Mammary epithelial cell (primary cell): ENCODE measurements at regions of chr22 and their contacts with region 1.

Region 1: DNA sequence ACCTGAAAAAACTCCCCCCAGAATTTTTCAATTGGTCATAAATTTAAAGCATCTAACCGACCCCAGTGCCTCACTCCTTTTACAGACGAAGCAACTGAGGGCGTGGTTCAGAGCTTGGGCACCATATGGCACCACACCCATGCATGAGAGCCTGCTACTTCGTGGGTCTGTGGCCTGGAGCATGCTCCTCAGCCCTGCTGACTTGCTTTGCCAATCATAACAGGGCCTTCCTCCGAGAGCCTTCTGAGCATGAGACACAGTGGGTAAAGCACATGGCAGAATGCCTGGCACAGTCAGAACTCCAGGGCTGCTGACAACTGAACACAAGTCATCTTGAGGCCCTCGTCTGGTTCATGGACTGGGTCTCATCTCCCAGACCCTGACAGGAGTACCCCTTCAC is 33.3 kb downstream of the HIRA start:
- DNase-seq: no peak
- H3K4me3 ChIP-seq: no peak overlapping the region
- H3K27ac ChIP-seq: no peak overlapping the region
- H3K4me1 ChIP-seq: no peaks in the 10 kb centered on the region
- H3K27me3 ChIP-seq: no peaks in the 10 kb centered on the region
- CTCF ChIP-seq: no peak

Region 2: GRCh38 chr22:17570851-17571641 is 1827.2 kb before region 1 on chr22:
- CTCF ChIA-PET with region 1: no interaction called
- dilution Hi-C with region 1: no loop called
- in situ Hi-C with region 1: no loop called
- intact Hi-C with region 1: no loop called
- DNase-seq: peak; percentile 53
- H3K4me3 ChIP-seq: peak overlapping the region in 1 of 3 experiments; percentile 13
- H3K27ac ChIP-seq: peak overlapping the region; percentile 42
- H3K4me1 ChIP-seq: peaks cover 23% of the 10 kb centered on the region
- H3K27me3 ChIP-seq: no peaks in the 10 kb centered on the region
- CTCF ChIP-seq: no peak

Region 3: DNA sequence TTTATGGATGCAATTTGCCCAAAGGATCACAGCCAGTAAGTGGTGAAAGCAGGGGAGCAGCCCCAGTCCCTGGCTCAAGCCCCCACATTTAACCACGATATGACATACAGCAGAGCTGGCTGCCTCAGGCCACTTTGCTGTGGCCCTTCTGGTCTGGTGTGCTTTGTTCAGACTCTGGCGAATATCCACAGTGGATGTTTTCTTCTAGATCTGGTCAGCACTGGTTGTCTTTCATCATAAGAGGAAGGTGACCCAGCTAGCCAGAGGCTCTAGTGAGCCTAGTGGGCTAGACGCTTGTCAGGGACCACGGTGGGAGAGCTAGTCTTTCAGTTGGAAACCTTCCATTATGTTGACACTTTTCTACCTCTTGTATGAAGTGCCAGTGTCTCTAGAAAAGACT is 318.5 kb before region 1 on chr22:
- CTCF ChIA-PET with region 1: no interaction called
- dilution Hi-C with region 1: loop called (anchors 5 kb)
- in situ Hi-C with region 1: no loop called
- intact Hi-C with region 1: no loop called
- DNase-seq: no peak
- H3K4me3 ChIP-seq: no peak overlapping the region
- H3K27ac ChIP-seq: no peak overlapping the region
- H3K4me1 ChIP-seq: no peaks in the 10 kb centered on the region
- H3K27me3 ChIP-seq: no peaks in the 10 kb centered on the region
- CTCF ChIP-seq: no peak

Region 4: DNA sequence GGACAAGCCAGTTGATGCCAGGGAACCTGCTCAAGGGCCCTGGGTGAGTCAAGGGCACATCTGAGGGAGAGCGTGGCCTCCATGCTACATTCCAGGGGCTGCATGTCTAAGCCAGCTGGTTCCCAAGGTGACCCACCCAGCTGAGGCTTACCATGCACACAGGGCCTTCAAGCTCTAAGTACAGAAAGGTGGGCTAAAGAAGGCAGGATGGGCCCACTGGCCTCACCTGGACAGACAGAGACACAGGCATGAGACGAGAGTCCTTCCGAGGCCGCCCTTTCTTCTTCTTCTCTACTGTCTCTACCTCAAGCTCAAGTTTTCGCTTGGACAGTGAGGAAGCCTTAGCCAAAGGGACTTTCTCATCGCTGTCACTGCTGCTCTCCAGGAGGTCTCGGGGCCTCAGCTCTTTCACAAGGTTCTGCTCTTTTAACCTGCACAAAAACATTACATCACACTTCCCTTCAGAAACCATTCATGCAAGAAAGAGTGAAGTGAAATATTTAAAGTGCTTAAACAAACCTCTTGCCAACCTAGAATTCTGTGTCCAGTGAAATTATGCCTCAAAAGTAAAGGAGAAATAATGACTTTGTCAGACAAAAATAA is 36.6 kb before region 1 on chr22:
- CTCF ChIA-PET with region 1: no interaction called
- dilution Hi-C with region 1: loop called (anchors 5 kb)
- in situ Hi-C with region 1: no loop called
- intact Hi-C with region 1: no loop called
- DNase-seq: no peak
- H3K4me3 ChIP-seq: no peak overlapping the region
- H3K27ac ChIP-seq: no peak overlapping the region
- H3K4me1 ChIP-seq: no peaks in the 10 kb centered on the region
- H3K27me3 ChIP-seq: no peaks in the 10 kb centered on the region
- CTCF ChIP-seq: no peak

Region 5: DNA sequence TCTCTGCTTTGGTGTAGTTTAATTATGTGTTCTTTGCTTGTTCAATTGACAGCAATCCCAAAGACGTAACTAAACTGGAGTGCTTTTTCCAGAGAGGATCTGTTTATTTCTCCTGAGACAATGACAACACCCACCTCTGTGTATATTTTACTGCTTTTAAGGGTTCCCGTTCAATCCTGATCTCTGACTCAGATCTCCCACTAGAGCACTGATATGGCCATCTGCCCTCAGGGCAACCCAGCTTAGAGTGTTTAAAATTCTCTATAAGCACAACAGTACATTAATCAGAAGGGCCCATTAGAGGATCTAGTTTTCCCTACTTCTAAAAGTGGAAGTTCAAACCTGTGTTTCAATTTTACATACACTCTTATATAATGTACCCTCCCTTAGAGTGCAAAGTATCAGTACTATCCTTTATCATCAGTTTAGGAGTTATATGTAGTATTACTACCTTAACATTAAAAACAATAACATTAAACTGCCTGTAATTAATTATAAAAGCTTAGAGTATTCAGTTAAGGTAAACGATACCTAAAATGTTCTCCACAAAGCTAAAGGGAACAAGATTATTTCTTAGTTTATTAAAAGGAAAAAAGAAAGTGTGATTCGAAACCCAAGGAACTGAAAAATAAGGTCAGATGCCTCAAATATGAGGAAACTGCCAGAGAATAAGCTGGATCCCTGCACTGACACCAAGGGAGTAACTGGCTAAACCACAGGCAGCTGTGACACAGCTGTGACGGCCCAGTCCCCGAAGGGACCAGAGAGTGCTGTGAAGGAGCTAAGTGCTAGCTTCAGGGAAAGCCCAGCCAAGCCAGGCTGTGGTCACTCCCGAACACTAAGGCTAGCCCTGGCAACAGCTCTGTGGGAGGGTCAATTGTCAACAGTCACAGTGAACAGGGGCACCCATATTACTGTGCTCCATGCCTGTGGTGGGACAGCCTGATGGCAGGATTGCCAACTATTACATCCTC is 65.6 kb after region 1 on chr22:
- CTCF ChIA-PET with region 1: no interaction called
- dilution Hi-C with region 1: loop called (anchors 10 kb)
- in situ Hi-C with region 1: no loop called
- intact Hi-C with region 1: no loop called
- DNase-seq: no peak
- H3K4me3 ChIP-seq: no peak overlapping the region
- H3K27ac ChIP-seq: no peak overlapping the region
- H3K4me1 ChIP-seq: no peaks in the 10 kb centered on the region
- H3K27me3 ChIP-seq: no peaks in the 10 kb centered on the region
- CTCF ChIP-seq: no peak

Region 6: GRCh38 chr22:20438678-20439492 is 1040.7 kb after region 1 on chr22:
- CTCF ChIA-PET with region 1: no interaction called
- dilution Hi-C with region 1: no loop called
- in situ Hi-C with region 1: no loop called
- intact Hi-C with region 1: no loop called
- DNase-seq: no peak
- H3K4me3 ChIP-seq: no peak overlapping the region
- H3K27ac ChIP-seq: no peak overlapping the region
- H3K4me1 ChIP-seq: peaks cover 13% of the 10 kb centered on the region
- H3K27me3 ChIP-seq: peaks cover 30% of the 10 kb centered on the region
- CTCF ChIP-seq: no peak